ENCODE measurements at regions of chr6 and their contacts with region 1.

Region 1: DNA sequence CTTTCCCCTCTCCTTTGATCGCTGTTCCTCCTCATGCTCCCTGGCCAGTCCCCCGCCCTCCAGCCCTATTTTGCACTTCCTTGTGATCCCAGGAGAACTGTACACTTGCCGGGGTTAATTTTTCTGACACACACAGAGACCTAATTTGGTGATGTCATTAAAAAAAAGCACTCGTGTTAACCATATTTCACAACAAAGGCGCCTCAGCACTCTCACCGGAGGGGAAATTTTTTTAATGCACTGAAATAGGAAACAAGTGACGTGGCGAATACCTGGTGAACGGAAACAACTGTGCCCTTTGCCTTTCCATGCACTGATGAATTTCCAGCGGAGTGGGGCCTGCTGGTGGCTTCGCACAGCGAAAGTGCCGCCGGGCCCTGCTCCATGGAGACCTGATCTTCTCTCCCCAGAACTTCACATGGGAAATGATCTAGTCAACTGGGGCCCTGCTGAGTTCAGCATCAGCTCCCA is 53.9 kb upstream of the TAGAP start:
- DNase-seq: peak; percentile 67
- H3K4me3 Mint-ChIP-seq: peak overlapping the region; percentile 76
- H3K27ac Mint-ChIP-seq: peak overlapping the region; percentile 96
- H3K4me1 Mint-ChIP-seq: peaks cover 88% of the 10 kb centered on the region
- H3K27me3 Mint-ChIP-seq: no peaks in the 10 kb centered on the region

Region 2: GRCh38 chr6:158323561-158323958 is 775.1 kb before region 1 on chr6:
- intact Hi-C with region 1: no loop called
- DNase-seq: no peak
- H3K4me3 Mint-ChIP-seq: no peak overlapping the region
- H3K27ac Mint-ChIP-seq: peak overlapping the region; percentile 25
- H3K4me1 Mint-ChIP-seq: peaks cover 33% of the 10 kb centered on the region
- H3K27me3 Mint-ChIP-seq: no peaks in the 10 kb centered on the region

Region 3: DNA sequence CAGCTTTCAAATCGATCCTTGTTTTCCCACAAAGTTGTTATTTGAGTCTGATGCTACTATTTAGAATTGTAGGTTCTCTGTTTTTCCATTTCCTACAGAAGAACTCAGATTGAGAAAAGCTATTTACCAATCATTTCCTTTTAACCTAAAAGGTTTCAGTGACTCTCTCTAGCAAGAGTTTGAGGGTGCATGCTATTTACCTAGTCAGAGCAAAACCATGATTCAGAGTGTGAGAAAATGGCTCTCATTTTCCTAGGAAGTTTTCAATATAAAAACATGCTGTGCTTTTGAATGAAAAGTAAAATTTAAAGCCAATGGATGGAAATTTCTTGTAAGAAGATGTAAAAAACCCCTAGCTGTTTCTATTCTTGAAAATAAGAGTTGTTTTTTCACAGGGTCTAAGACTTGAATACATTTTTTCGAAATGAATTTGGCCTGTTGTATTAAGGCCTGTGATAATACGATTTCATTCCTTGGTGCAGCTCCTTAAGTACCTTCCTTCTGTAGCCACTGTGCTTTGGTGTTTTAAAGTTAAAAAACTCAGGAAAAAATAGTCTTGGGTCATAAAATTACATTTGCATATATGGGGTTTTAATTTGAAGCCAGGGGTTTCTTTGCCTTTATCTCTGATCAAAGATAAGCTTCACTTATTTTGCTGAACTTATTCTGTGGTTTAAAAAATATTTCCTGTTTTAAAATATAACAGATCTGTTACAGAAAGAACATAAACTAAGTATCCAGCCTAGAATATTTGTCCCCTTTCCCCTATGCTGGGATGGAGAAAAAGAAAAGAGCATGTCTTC is 80.7 kb before region 1 on chr6:
- intact Hi-C with region 1: loop called (anchors 1 kb)
- DNase-seq: no peak
- H3K4me3 Mint-ChIP-seq: peak overlapping the region; percentile 38
- H3K27ac Mint-ChIP-seq: peak overlapping the region; percentile 92
- H3K4me1 Mint-ChIP-seq: peaks cover 29% of the 10 kb centered on the region
- H3K27me3 Mint-ChIP-seq: no peaks in the 10 kb centered on the region

Region 4: GRCh38 chr6:159077123-159077522 is 21.5 kb before region 1 on chr6:
- intact Hi-C with region 1: loop called (anchors 1 kb)
- DNase-seq: no peak
- H3K4me3 Mint-ChIP-seq: peak overlapping the region; percentile 23
- H3K27ac Mint-ChIP-seq: peak overlapping the region; percentile 67
- H3K4me1 Mint-ChIP-seq: peaks cover 46% of the 10 kb centered on the region
- H3K27me3 Mint-ChIP-seq: peaks cover 10% of the 10 kb centered on the region

Region 5: GRCh38 chr6:159116343-159116742 is 17.7 kb after region 1 on chr6:
- intact Hi-C with region 1: no loop called
- DNase-seq: no peak
- H3K4me3 Mint-ChIP-seq: no peak overlapping the region
- H3K27ac Mint-ChIP-seq: no peak overlapping the region
- H3K4me1 Mint-ChIP-seq: peaks cover 5% of the 10 kb centered on the region
- H3K27me3 Mint-ChIP-seq: peaks cover 12% of the 10 kb centered on the region

Measured in activated T-helper 1 cell treated with anti-CD3 and anti-CD28 coated beads, Interleukin-12 subunit alpha, Interleukin-12 subunit beta, Interleukin-2, Interleukin-4 antibody, amounts not matched to agents 30 ng/mL and 10 ng/mL and 1 ng/mL, durations not matched to agents 14 hours and 24 hours and 36 hours (primary cell).